Activated naive CD8-positive, alpha-beta T cell treated with anti-CD3 and anti-CD28 coated beads, Interleukin-2, amount 10 ng/mL, durations not matched to agents 7 days and 5 days (primary cell): ENCODE measurements at regions of chr22 and their contacts with region 1.

Region 1: DNA sequence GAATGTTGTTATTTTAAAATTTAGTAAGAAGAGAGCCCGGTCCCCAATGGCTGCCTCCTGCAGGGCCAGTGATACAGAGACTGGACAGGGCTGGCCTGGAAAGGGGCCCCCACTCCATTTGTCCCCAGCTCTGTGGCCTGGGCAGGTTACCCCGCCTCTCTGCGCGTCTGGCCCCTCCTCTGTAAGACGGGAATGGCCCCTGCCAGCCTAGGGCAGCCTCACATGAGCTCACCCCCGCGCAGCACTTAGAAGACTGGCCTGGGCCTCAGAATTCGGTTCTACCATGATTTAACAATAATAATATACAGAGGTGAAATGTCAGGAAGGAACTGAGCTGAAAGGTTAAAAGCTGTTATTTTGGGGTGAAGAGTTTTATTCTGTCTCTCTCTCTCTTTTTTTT is 1.3 kb downstream of the APOBEC3G start:
- DNase-seq: no peak
- ATAC-seq: no peak
- H3K4me3 Mint-ChIP-seq: peak overlapping the region; percentile 96
- H3K27ac Mint-ChIP-seq: peak overlapping the region; percentile 94
- H3K4me1 Mint-ChIP-seq: peaks cover 43% of the 10 kb centered on the region
- H3K27me3 Mint-ChIP-seq: no peaks in the 10 kb centered on the region

Region 2: GRCh38 chr22:39090426-39091064 is 12.2 kb after region 1 on chr22:
- POLR2A ChIA-PET with region 1: interaction called, 14 read pairs
- DNase-seq: peak; percentile 87
- ATAC-seq: peak; percentile 88
- H3K4me3 Mint-ChIP-seq: peak overlapping the region; percentile 75
- H3K27ac Mint-ChIP-seq: peak overlapping the region; percentile 89
- H3K4me1 Mint-ChIP-seq: peaks cover 85% of the 10 kb centered on the region
- H3K27me3 Mint-ChIP-seq: no peaks in the 10 kb centered on the region

Region 3: GRCh38 chr22:39097098-39098020 is 19.0 kb after region 1 on chr22 and contains the start of gene APOBEC3H:
- POLR2A ChIA-PET with region 1: interaction called, 11 read pairs
- DNase-seq: no peak
- ATAC-seq: peak; percentile 59
- H3K4me3 Mint-ChIP-seq: peak within 1 kb of the TSS; percentile 88
- H3K27ac Mint-ChIP-seq: peak within 1 kb of the TSS; percentile 96
- H3K4me1 Mint-ChIP-seq: peaks cover 59% of the 10 kb centered on the region
- H3K27me3 Mint-ChIP-seq: no peaks in the 10 kb centered on the region
- total RNA-seq, gene APOBEC3H: 75.5 to 84.9 TPM